ENCODE measurements at regions of chr7 and their contacts with region 1.

Region 1: GRCh38 chr7:99990460-99990852 is 14.6 kb upstream of the AZGP1 start:
- DNase-seq: no peak
- ATAC-seq: no peak
- H3K4me3 Mint-ChIP-seq: no peak overlapping the region
- H3K27ac Mint-ChIP-seq: no peak overlapping the region
- H3K4me1 Mint-ChIP-seq: peaks cover 3% of the 10 kb centered on the region
- H3K27me3 Mint-ChIP-seq: peaks cover 20% of the 10 kb centered on the region
- CTCF ChIP-seq: no peak

Region 2: DNA sequence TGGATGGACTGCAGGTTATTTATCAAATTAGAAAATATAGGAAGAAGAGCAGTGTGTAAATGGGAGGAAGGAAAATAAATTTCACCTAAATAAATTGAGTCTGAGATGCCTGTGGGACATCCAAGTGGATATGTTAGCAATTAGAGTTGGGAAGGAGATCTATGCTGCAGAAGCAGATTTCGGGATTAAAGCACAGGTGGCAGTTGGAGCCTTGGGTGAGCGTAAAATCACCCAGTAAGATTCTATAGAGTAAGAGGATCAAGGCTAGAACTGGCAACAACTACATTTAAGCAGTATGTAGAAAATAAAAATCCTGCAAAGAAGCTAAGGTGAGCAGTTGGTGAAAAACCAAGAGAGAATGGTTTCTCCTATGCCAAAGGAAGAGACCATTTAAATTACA is 79.5 kb before region 1 on chr7:
- CTCF ChIA-PET with region 1: interaction called, 19 read pairs
- POLR2A ChIA-PET with region 1: no interaction called
- intact Hi-C with region 1: loop called (anchors 1 kb)
- DNase-seq: no peak
- ATAC-seq: no peak
- H3K4me3 Mint-ChIP-seq: no peak overlapping the region
- H3K27ac Mint-ChIP-seq: no peak overlapping the region
- H3K4me1 Mint-ChIP-seq: peaks cover 28% of the 10 kb centered on the region
- H3K27me3 Mint-ChIP-seq: no peaks in the 10 kb centered on the region
- CTCF ChIP-seq: no peak

Region 3: DNA sequence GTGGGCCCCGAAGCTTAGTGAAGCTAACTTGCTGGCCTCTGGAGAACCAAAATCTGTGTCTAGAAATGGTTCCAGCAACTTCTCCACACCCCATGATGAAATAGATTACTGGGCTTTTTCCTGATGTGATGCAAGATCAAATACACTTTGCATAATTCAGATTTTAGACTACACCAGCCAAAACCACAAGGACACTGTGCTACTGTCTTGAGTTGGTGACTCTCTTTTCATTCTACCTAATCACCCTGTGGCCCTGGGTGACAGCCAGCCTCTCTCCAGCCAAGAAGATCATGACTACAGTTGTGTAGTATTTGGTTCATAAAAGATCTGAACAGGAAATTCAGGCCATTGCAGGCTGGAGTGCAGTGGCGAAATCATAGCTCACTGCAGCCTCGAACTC is 36.8 kb before region 1 on chr7:
- CTCF ChIA-PET with region 1: no interaction called
- POLR2A ChIA-PET with region 1: no interaction called
- intact Hi-C with region 1: no loop called
- DNase-seq: no peak
- ATAC-seq: no peak
- H3K4me3 Mint-ChIP-seq: no peak overlapping the region
- H3K27ac Mint-ChIP-seq: no peak overlapping the region
- H3K4me1 Mint-ChIP-seq: no peaks in the 10 kb centered on the region
- H3K27me3 Mint-ChIP-seq: peaks cover 23% of the 10 kb centered on the region
- CTCF ChIP-seq: no peak

Region 4: GRCh38 chr7:99975782-99976521 is 14.5 kb before region 1 on chr7 and contains the start of gene AZGP1:
- CTCF ChIA-PET with region 1: interaction called, 10 read pairs
- POLR2A ChIA-PET with region 1: no interaction called
- intact Hi-C with region 1: loop called (anchors 1 kb)
- DNase-seq: no peak
- ATAC-seq: no peak
- H3K4me3 Mint-ChIP-seq: no peak within 1 kb of the TSS
- H3K27ac Mint-ChIP-seq: no peak within 1 kb of the TSS
- H3K4me1 Mint-ChIP-seq: peaks cover 3% of the 10 kb centered on the region
- H3K27me3 Mint-ChIP-seq: peaks cover 22% of the 10 kb centered on the region
- CTCF ChIP-seq: no peak
- total RNA-seq, gene AZGP1: not detected in 2 replicates

Region 5: DNA sequence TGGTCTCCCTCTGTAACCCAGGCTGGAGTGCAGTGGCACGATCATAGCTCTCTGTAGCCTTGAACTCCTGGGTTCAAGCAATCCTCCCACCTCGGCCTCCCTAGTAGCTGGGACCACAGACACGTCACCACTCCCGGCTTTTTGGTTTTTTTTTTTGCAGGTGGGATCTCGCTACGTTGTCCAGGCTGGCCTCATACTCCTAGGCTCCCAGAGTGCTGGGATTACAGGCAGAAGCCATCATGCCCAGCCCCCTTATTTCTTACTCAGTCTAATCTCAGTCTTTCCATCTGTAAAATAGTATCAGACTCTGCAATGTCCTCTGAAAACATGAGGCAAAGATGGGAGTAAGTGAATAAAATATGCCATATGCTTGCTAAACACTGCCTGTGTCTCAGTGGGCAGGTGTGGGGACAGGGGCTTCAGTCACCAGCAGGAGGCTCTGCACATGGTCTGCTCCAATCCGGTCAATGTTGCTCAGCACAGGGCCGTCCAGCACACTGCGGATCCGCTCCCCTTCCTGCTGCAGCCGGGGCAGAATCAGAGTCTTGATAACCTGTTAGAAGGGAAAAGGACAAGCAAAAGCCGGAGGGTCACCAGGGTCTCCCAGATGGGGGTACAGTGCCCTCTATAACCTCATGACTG is 119.2 kb after region 1 on chr7:
- CTCF ChIA-PET with region 1: no interaction called
- POLR2A ChIA-PET with region 1: no interaction called
- intact Hi-C with region 1: no loop called
- DNase-seq: no peak
- ATAC-seq: no peak
- H3K4me3 Mint-ChIP-seq: no peak overlapping the region
- H3K27ac Mint-ChIP-seq: no peak overlapping the region
- H3K4me1 Mint-ChIP-seq: no peaks in the 10 kb centered on the region
- H3K27me3 Mint-ChIP-seq: no peaks in the 10 kb centered on the region
- CTCF ChIP-seq: no peak

Region 6: DNA sequence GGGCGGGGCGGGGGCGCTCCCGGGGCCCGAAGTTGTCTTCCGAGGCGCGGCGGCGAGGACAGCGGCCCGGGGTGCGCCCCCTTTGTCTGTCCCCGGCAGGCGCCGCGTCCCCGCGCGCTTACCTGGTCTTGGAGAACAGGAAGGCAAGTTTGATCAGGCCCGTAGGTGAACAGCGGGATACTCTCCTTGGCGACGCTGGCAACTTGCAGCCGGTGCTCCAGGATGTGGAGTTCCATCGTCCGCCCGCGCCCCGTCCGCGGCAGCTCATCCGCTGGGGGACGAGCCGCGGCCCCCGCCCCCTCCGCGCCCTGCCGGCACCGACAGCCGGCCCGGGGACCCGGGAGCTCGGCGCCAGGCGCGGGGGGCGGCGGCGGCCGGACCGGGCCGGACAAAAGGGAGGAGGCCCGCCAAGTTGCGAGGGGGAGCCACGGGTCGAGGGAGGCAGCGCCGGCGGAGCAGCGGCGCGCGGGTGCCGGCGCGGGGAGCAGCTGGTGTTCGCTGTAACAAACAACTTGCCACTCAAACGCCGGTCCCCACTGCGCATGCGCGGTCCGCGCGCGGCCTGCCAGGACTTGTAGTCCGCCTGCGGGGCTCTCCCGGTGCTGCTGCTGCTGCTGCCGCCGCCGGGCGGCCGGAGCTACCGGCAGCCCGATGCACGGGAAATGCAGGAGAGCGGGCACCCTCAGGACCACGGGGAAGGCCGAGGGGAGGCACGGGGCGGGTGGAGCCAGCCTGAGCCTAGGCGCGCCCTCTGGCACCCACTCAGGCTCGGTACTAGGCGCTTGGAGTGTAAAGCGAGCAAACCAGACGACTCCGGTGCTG is 281.5 kb after region 1 on chr7:
- CTCF ChIA-PET with region 1: no interaction called
- POLR2A ChIA-PET with region 1: no interaction called
- intact Hi-C with region 1: no loop called
- DNase-seq: peak; percentile 96
- ATAC-seq: peak; percentile 91
- H3K4me3 Mint-ChIP-seq: peak overlapping the region; percentile 79
- H3K27ac Mint-ChIP-seq: peak overlapping the region; percentile 50
- H3K4me1 Mint-ChIP-seq: peaks cover 28% of the 10 kb centered on the region
- H3K27me3 Mint-ChIP-seq: no peaks in the 10 kb centered on the region
- CTCF ChIP-seq: no peak

Region 7: GRCh38 chr7:100435401-100436304 is 445.2 kb after region 1 on chr7:
- CTCF ChIA-PET with region 1: no interaction called
- POLR2A ChIA-PET with region 1: no interaction called
- intact Hi-C with region 1: no loop called
- DNase-seq: peak; percentile 48
- ATAC-seq: peak; percentile 23
- H3K4me3 Mint-ChIP-seq: peak overlapping the region; percentile 91
- H3K27ac Mint-ChIP-seq: peak overlapping the region; percentile 86
- H3K4me1 Mint-ChIP-seq: peaks cover 54% of the 10 kb centered on the region
- H3K27me3 Mint-ChIP-seq: no peaks in the 10 kb centered on the region
- CTCF ChIP-seq: no peak